Activated CD8-positive, alpha-beta T cell treated with anti-CD3 and anti-CD28 coated beads for 36 hours (primary cell): ENCODE measurements at regions of chr16 and their contacts with region 1.

Region 1: DNA sequence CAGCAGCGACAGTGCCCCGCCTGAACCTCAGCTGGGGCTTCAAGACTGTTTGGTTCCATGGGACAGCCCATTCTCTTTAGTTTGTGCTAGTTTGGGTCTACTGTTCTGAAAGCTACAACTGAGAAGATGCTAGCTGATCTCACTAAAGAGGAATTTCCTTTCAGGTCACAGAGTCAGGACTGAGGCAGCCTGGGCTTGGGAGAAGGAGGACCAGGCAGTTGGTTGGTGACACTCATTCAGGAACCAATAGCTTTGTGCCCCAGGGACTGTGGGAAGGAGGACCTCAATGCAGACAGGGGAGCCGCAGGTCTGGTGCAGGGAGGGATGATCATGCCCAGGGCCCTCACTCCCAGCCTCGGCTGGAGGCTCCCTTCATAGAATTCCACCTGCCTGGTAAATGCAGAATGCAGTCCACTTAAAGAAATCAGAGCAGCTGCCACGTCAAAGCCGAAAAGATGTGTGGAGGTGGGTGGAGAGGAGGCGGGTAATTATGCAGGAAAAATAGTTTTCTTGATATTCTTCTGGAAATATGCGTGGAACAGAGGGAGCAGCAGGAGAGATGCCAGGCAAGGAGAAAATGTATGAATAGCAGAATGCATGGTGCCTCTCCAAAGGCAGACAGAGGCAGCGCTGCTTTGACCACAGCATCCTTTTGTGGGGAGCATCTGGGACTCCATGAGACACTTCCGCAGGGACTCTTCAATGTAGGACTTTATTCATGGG is 32.6 kb upstream of the ZFP90 start:
- DNase-seq: no peak
- ATAC-seq: no peak
- H3K4me3 Mint-ChIP-seq: no peak overlapping the region
- H3K27ac Mint-ChIP-seq: no peak overlapping the region
- H3K4me1 Mint-ChIP-seq: no peaks in the 10 kb centered on the region
- H3K27me3 Mint-ChIP-seq: no peaks in the 10 kb centered on the region
- CTCF ChIP-seq: no peak

Region 2: GRCh38 chr16:68396481-68396880 is 110.0 kb before region 1 on chr16:
- CTCF ChIA-PET with region 1: interaction called, 47 read pairs
- POLR2A ChIA-PET with region 1: no interaction called
- intact Hi-C with region 1: loop called (anchors 5 kb)
- DNase-seq: peak; percentile 68
- ATAC-seq: peak; percentile 77
- H3K4me3 Mint-ChIP-seq: no peak overlapping the region
- H3K27ac Mint-ChIP-seq: no peak overlapping the region
- H3K4me1 Mint-ChIP-seq: peaks cover 7% of the 10 kb centered on the region
- H3K27me3 Mint-ChIP-seq: no peaks in the 10 kb centered on the region
- CTCF ChIP-seq: peak; percentile 60

Region 3: DNA sequence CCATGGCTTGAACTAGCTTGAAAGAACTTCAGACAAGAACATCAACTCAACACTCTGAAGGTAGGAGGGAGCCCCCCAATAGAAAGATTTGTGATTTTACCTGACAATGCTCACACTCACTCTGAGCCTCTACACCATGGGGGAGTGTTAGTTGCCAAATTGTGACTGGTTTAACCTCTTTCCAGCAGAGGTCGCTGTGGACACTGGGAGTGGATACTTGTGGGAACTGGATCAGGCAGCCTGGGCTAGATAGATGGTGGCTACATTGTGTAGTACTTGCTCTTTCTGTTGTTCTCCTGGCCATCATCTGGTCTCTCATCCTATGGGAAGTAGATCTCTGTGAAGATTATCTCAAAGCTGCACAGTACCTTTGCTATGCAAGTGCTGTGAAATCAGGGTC is 61.0 kb before region 1 on chr16:
- CTCF ChIA-PET with region 1: interaction called, 15 read pairs
- POLR2A ChIA-PET with region 1: no interaction called
- intact Hi-C with region 1: no loop called
- DNase-seq: peak; percentile 72
- ATAC-seq: no peak
- H3K4me3 Mint-ChIP-seq: no peak overlapping the region
- H3K27ac Mint-ChIP-seq: no peak overlapping the region
- H3K4me1 Mint-ChIP-seq: peaks cover 15% of the 10 kb centered on the region
- H3K27me3 Mint-ChIP-seq: peaks cover 32% of the 10 kb centered on the region
- CTCF ChIP-seq: peak; percentile 69

Region 4: GRCh38 chr16:68452176-68452575 is 54.3 kb before region 1 on chr16:
- CTCF ChIA-PET with region 1: interaction called, 12 read pairs
- POLR2A ChIA-PET with region 1: no interaction called
- intact Hi-C with region 1: no loop called
- DNase-seq: no peak
- ATAC-seq: no peak
- H3K4me3 Mint-ChIP-seq: no peak overlapping the region
- H3K27ac Mint-ChIP-seq: no peak overlapping the region
- H3K4me1 Mint-ChIP-seq: peaks cover 12% of the 10 kb centered on the region
- H3K27me3 Mint-ChIP-seq: peaks cover 2% of the 10 kb centered on the region
- CTCF ChIP-seq: no peak

Region 5: GRCh38 chr16:68470461-68471150 is 35.9 kb before region 1 on chr16:
- CTCF ChIA-PET with region 1: interaction called, 15 read pairs
- POLR2A ChIA-PET with region 1: no interaction called
- intact Hi-C with region 1: no loop called
- DNase-seq: peak; percentile 32
- ATAC-seq: peak; percentile 74
- H3K4me3 Mint-ChIP-seq: peak overlapping the region; percentile 72
- H3K27ac Mint-ChIP-seq: peak overlapping the region; percentile 88
- H3K4me1 Mint-ChIP-seq: peaks cover 38% of the 10 kb centered on the region
- H3K27me3 Mint-ChIP-seq: no peaks in the 10 kb centered on the region
- CTCF ChIP-seq: no peak